Activated T-helper 1 cell treated with anti-CD3 and anti-CD28 coated beads, Interleukin-12 subunit alpha, Interleukin-12 subunit beta, Interleukin-2, Interleukin-4 antibody, amounts not matched to agents 30 ng/mL and 10 ng/mL and 1 ng/mL, durations not matched to agents 14 hours and 24 hours and 36 hours (primary cell): ENCODE measurements at regions of chr19 and their contacts with region 1.

Region 1: GRCh38 chr19:51473009-51473707 is 5.2 kb upstream of the CEACAM18 start:
- DNase-seq: peak; percentile 63
- H3K4me3 Mint-ChIP-seq: no peak overlapping the region
- H3K27ac Mint-ChIP-seq: peak overlapping the region; percentile 55
- H3K4me1 Mint-ChIP-seq: peaks cover 31% of the 10 kb centered on the region
- H3K27me3 Mint-ChIP-seq: peaks cover 9% of the 10 kb centered on the region

Region 2: GRCh38 chr19:50580970-50581634 is 892.1 kb before region 1 on chr19:
- intact Hi-C with region 1: no loop called
- DNase-seq: no peak
- H3K4me3 Mint-ChIP-seq: no peak overlapping the region
- H3K27ac Mint-ChIP-seq: no peak overlapping the region
- H3K4me1 Mint-ChIP-seq: no peaks in the 10 kb centered on the region
- H3K27me3 Mint-ChIP-seq: peaks cover 2% of the 10 kb centered on the region

Region 3: GRCh38 chr19:51422053-51422448 is 51.1 kb before region 1 on chr19:
- intact Hi-C with region 1: loop called (anchors 1 kb)
- DNase-seq: peak; percentile 78
- H3K4me3 Mint-ChIP-seq: no peak overlapping the region
- H3K27ac Mint-ChIP-seq: no peak overlapping the region
- H3K4me1 Mint-ChIP-seq: peaks cover 10% of the 10 kb centered on the region
- H3K27me3 Mint-ChIP-seq: peaks cover 26% of the 10 kb centered on the region

Region 4: DNA sequence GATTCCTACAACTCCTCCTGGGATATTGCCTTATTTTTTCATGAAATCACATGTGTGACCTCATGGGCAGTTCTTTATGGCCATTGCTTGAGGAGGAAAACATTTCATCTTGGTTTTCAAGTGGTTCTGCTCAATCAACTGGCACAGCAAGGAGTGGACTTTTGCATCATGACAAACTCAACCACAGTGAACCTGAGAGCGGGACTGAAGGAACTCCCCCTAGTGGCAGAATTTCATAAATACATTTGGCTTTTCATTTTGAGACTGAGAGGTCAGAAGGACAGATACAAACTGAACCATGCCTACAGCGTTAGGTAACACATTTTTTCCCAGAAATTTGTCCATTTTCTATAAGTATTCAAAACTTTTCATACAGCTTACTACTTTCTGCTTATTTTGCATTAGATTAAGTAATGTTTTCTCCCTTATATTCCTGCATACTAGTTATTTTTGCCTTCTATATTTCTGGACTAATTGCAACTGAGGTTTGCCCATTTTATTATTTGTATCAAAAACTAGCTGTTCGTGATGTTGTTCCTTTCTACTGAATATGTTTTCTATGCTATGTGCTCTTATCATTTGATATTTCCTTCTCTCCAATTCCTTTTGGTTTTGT is 41.8 kb after region 1 on chr19:
- intact Hi-C with region 1: loop called (anchors 1 kb)
- DNase-seq: peak; percentile 15
- H3K4me3 Mint-ChIP-seq: no peak overlapping the region
- H3K27ac Mint-ChIP-seq: no peak overlapping the region
- H3K4me1 Mint-ChIP-seq: peaks cover 17% of the 10 kb centered on the region
- H3K27me3 Mint-ChIP-seq: peaks cover 26% of the 10 kb centered on the region

Region 5: DNA sequence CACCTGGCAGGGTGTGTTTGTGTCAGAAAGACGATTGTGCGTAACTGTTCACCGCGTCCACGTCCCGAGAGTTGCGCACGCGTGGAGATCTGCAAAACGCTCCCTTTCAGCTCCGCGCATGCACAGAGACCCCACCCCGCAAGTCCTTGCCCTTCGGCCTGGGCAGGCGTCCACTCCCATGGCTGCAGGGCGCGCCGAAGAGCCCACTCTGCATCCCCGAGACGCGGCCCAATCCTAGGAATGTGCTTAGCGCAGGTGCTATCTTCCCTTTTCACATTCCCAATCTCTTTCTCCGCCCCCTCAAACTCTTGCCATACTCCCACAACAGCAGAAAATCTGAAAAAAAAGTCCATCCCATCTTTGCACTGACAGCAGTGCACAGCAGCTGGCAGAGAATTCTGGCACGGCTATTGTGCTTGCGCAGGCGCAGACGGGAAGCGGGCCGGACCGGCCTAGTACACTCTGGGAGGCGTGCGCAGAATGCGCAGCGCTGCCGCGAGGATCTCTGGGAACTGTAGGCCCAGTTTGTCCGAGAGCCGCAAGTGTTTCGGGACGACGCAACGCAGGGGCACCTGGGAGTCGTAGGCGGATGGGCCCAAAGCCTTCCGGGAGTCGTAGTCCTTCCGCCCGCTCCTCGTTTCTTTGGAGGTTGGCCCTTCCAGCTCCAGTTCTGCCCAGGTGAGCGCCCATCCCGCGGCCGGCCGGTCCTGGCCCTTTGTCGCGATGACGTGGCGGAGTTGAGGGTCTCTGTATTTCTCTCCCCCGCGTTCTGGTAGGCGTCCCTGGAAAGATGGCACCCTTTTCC is 121.0 kb after region 1 on chr19:
- intact Hi-C with region 1: no loop called
- DNase-seq: peak; percentile 95
- H3K4me3 Mint-ChIP-seq: peak overlapping the region; percentile 92
- H3K27ac Mint-ChIP-seq: peak overlapping the region; percentile 78
- H3K4me1 Mint-ChIP-seq: peaks cover 20% of the 10 kb centered on the region
- H3K27me3 Mint-ChIP-seq: no peaks in the 10 kb centered on the region